Prostate gland (tissue), 2 donors: ENCODE measurements at regions of chr3 and their contacts with region 1.

Region 1: GRCh38 chr3:25468866-25469319 is 40.8 kb downstream of the RARB start:
- DNase-seq: peak; percentile 28
- H3K4me3 ChIP-seq: no peak overlapping the region
- H3K27ac ChIP-seq: peak overlapping the region in 1 of 2 donors; percentile 52
- H3K4me1 ChIP-seq: peaks cover 4% of the 10 kb centered on the region
- H3K27me3 ChIP-seq: no peaks in the 10 kb centered on the region
- CTCF ChIP-seq: peak in 1 of 4 experiments; percentile 35
- POLR2A ChIP-seq: no peak

Region 2: GRCh38 chr3:25433868-25434267 is 35.0 kb before region 1 on chr3:
- intact Hi-C with region 1: loop called (anchors 5 kb)
- DNase-seq: no peak
- H3K4me3 ChIP-seq: no peak overlapping the region
- H3K27ac ChIP-seq: peak overlapping the region; percentile 26 to 44
- H3K4me1 ChIP-seq: no peaks in the 10 kb centered on the region
- H3K27me3 ChIP-seq: no peaks in the 10 kb centered on the region
- CTCF ChIP-seq: no peak
- POLR2A ChIP-seq: no peak